HCT116 (cell line): ENCODE measurements at regions of chr13 and their contacts with region 1.

Region 1: GRCh38 chr13:26186118-26186870 is 35.8 kb downstream of the RNF6 start:
- DNase-seq: peak; percentile 65
- ATAC-seq: peak; percentile 89
- H3K4me3 ChIP-seq: peak overlapping the region; percentile 7 to 32; a peak in 2 of 4 replicates
- H3K27ac ChIP-seq: no peak overlapping the region
- H3K4me1 ChIP-seq: peaks cover 0 to 8% of the 10 kb centered on the region in 2 experiments; a peak in 2 of 4 replicates
- H3K27me3 ChIP-seq: no peaks in the 10 kb centered on the region
- CTCF ChIP-seq: peak; percentile 27 to 35 (median 27); a peak in 4 of 6 replicates
- POLR2A ChIP-seq: no peak
- RAD21 ChIP-seq: no peak

Region 2: GRCh38 chr13:26498656-26499591 is 312.6 kb after region 1 on chr13:
- CTCF ChIA-PET with region 1: interaction called, 80 read pairs
- POLR2A ChIA-PET with region 1: no interaction called
- RAD21 ChIA-PET with region 1: interaction called, 16 to 20 read pairs
- intact Hi-C with region 1: loop called (anchors 1 kb)
- DNase-seq: no peak
- ATAC-seq: no peak
- H3K4me3 ChIP-seq: no peak overlapping the region
- H3K27ac ChIP-seq: no peak overlapping the region
- H3K4me1 ChIP-seq: no peaks in the 10 kb centered on the region
- H3K27me3 ChIP-seq: no peaks in the 10 kb centered on the region
- CTCF ChIP-seq: no peak
- POLR2A ChIP-seq: no peak
- RAD21 ChIP-seq: 0 out of 2 replicates have a peak, but pooled peaks have one; percentile 4

Region 3: GRCh38 chr13:26605845-26606244 is 419.6 kb after region 1 on chr13:
- CTCF ChIA-PET with region 1: interaction called, 26 read pairs
- POLR2A ChIA-PET with region 1: no interaction called
- RAD21 ChIA-PET with region 1: interaction called in 1 of 2 experiments, 3 read pairs
- intact Hi-C with region 1: loop called (anchors 5 kb)
- DNase-seq: no peak
- ATAC-seq: peak; percentile 92
- H3K4me3 ChIP-seq: no peak overlapping the region
- H3K27ac ChIP-seq: no peak overlapping the region
- H3K4me1 ChIP-seq: no peaks in the 10 kb centered on the region
- H3K27me3 ChIP-seq: peaks cover 24% of the 10 kb centered on the region
- CTCF ChIP-seq: peak in 2 of 3 experiments; percentile 58 to 59; a peak in 4 of 6 replicates
- POLR2A ChIP-seq: no peak
- RAD21 ChIP-seq: peak; percentile 19; the same call in 1 of the 2 replicates

Region 4: GRCh38 chr13:26628706-26629105 is 442.4 kb after region 1 on chr13:
- CTCF ChIA-PET with region 1: interaction called, 10 read pairs
- POLR2A ChIA-PET with region 1: no interaction called
- RAD21 ChIA-PET with region 1: no interaction called
- intact Hi-C with region 1: no loop called
- DNase-seq: no peak
- ATAC-seq: peak; percentile 53; the same call in 1 of the 2 replicates
- H3K4me3 ChIP-seq: no peak overlapping the region
- H3K27ac ChIP-seq: no peak overlapping the region
- H3K4me1 ChIP-seq: no peaks in the 10 kb centered on the region
- H3K27me3 ChIP-seq: no peaks in the 10 kb centered on the region
- CTCF ChIP-seq: no peak
- POLR2A ChIP-seq: no peak
- RAD21 ChIP-seq: no peak